Caco-2 (cell line): ENCODE measurements at regions of chr16 and their contacts with region 1.

Region 1: GRCh38 chr16:3305109-3306068 is at the starts of genes TIGD7 and ZNF75A:
- DNase-seq: peak; percentile 83 to 86
- H3K4me3 ChIP-seq: peak within 1 kb of the TSS; percentile 73
- H3K4me3 Mint-ChIP-seq: peak within 1 kb of the TSS; percentile 68
- H3K27ac Mint-ChIP-seq: peak within 1 kb of the TSS; percentile 32
- H3K4me1 ChIP-seq: no peaks in the 10 kb centered on the region
- H3K4me1 Mint-ChIP-seq: no peaks in the 10 kb centered on the region
- H3K27me3 ChIP-seq: no peaks in the 10 kb centered on the region
- H3K27me3 Mint-ChIP-seq: no peaks in the 10 kb centered on the region
- CTCF ChIP-seq: no peak
- total RNA-seq, gene TIGD7: 3.7 and 5.2 TPM in 2 replicates
- total RNA-seq, gene ZNF75A: 28.4 and 29.1 TPM in 2 replicates

Region 2: GRCh38 chr16:3317315-3317999 is 12.1 kb after region 1 on chr16:
- CTCF ChIA-PET with region 1: no interaction called
- POLR2A ChIA-PET with region 1: interaction called, 10 read pairs
- intact Hi-C with region 1: no loop called
- DNase-seq: no peak
- H3K4me3 ChIP-seq: no peak overlapping the region
- H3K4me3 Mint-ChIP-seq: no peak overlapping the region
- H3K27ac Mint-ChIP-seq: no peak overlapping the region
- H3K4me1 ChIP-seq: no peaks in the 10 kb centered on the region
- H3K4me1 Mint-ChIP-seq: no peaks in the 10 kb centered on the region
- H3K27me3 ChIP-seq: no peaks in the 10 kb centered on the region
- H3K27me3 Mint-ChIP-seq: no peaks in the 10 kb centered on the region
- CTCF ChIP-seq: no peak

Region 3: DNA sequence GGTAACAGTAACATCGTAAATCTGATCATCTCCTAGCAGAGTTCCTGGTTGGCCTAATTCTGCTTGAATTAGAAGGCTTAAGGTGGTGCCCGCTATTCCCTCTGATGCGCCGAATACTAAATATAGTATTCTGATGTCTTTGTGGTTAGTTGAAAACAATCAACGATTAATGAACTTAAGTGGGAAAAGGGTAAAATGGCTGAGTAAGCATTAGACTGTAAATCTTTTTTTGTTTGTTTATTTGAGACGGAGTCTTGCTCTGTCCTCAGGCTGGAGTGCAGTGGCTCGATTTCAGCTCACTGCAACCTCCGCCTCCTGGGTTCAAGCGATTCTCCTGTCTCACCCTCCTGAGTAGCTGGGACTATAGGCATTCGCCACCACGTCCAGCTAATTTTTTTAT is 63.7 kb after region 1 on chr16:
- CTCF ChIA-PET with region 1: no interaction called
- POLR2A ChIA-PET with region 1: no interaction called
- intact Hi-C with region 1: no loop called
- DNase-seq: no peak
- H3K4me3 ChIP-seq: no peak overlapping the region
- H3K4me3 Mint-ChIP-seq: no peak overlapping the region
- H3K27ac Mint-ChIP-seq: no peak overlapping the region
- H3K4me1 ChIP-seq: no peaks in the 10 kb centered on the region
- H3K4me1 Mint-ChIP-seq: no peaks in the 10 kb centered on the region
- H3K27me3 ChIP-seq: no peaks in the 10 kb centered on the region
- H3K27me3 Mint-ChIP-seq: no peaks in the 10 kb centered on the region
- CTCF ChIP-seq: no peak

Region 4: DNA sequence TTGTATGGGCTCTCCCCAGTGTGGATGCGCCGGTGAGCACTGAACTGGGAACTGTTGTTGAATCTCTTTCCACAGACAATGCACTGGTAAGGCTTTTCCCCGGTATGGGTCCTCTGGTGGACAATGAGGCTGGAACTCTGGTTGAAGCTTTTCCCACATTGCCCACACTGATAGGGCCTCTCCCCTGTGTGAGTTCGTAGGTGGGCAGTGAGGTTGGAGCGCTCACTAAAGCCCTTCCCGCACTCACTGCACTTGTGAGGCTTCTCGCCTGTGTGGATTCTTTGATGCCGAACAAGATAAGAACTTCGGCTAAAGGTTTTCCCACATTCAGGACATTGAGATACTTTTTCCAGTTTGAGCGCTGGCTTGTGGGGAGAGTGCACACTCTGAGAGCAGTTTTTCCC is 77.7 kb after region 1 on chr16:
- CTCF ChIA-PET with region 1: no interaction called
- POLR2A ChIA-PET with region 1: no interaction called
- intact Hi-C with region 1: no loop called
- DNase-seq: no peak
- H3K4me3 ChIP-seq: no peak overlapping the region
- H3K4me3 Mint-ChIP-seq: no peak overlapping the region
- H3K27ac Mint-ChIP-seq: no peak overlapping the region
- H3K4me1 ChIP-seq: no peaks in the 10 kb centered on the region
- H3K4me1 Mint-ChIP-seq: no peaks in the 10 kb centered on the region
- H3K27me3 ChIP-seq: no peaks in the 10 kb centered on the region
- H3K27me3 Mint-ChIP-seq: no peaks in the 10 kb centered on the region
- CTCF ChIP-seq: no peak